Right ventricle myocardium inferior (tissue), 1 donor: ENCODE measurements at regions of chr6 and their contacts with region 1.

Region 1: DNA sequence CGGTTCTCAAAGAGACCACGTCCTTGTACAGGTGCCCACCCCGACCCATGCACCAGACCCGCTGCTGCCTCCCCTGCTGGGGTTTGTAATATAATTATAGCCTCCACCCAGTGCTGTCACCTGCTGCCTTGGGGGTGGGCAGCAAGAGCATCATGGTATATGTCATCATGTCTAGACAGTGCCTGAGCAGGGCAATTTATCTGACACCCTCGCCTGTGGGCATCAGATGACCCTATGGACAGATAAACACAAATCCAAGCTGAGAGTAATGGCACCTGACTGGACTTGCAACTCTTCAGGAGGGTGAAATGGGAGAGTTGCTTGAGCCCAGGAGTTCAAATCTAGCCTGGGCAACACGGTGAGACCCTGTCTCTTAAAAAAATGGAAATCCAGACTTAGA is 23.0 kb upstream of the TUBB2A start:
- DNase-seq: no peak
- ATAC-seq: no peak

Region 2: DNA sequence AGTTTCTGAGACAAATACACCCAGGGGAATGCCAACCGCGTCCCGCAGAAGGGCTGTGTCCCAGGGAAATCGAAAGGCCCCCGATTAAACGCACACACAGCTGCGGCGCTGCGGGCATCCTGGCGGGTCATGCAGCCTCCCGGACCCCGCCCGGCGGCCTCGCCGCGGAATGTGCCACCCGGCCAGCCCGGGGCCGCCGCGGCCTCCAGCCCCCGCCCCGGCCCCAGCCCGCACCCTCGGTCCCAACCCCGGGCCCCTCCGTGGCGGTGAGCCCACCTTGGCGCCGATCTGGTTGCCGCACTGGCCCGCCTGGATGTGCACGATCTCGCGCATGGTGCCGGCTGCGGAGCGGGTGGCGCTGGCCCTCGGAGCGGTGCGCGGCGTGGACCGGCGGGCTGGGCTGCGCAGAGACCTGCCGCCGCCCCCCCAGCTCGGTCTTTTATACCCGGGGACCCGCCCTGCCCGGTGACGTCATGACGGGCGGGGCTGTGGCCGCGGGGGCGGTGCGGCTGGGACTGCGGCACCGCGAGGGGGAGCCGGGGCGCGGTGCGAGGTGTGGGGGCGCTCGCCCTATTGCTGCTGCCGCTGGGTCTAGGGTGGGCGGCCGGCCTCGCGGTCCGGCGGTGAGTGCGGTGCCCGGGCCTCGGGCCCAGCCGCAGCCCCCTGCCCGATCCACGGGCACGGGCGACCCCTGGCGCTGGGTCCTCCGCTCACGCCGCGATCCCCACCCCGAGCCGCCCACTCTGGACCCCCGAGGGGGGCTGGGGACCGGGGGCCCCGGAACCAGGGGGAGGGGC is 23.0 kb before region 1 on chr6 and contains the start of gene TUBB2A:
- intact Hi-C with region 1: loop called (anchors 1 kb)
- DNase-seq: peak; percentile 93
- ATAC-seq: peak; percentile 93
- total RNA-seq, gene TUBB2A: 25.0 TPM